CD8-positive, alpha-beta memory T cell (primary cell): ENCODE measurements at regions of chr22 and their contacts with region 1.

Region 1: GRCh38 chr22:22810018-22810427 is 77.6 kb upstream of the IGLL5 start:
- DNase-seq: peak; percentile 58 to 88 (median 74)
- H3K4me3 ChIP-seq: no peak overlapping the region
- H3K4me3 Mint-ChIP-seq: peak overlapping the region in 6 of 7 donors; percentile 60 to 87 (median 82)
- H3K27ac ChIP-seq: no peak overlapping the region
- H3K27ac Mint-ChIP-seq: peak overlapping the region; percentile 82 to 97 (median 88)
- H3K4me1 ChIP-seq: peaks cover 18% of the 10 kb centered on the region
- H3K4me1 Mint-ChIP-seq: peaks cover 86 to 94% (median 92%) of the 10 kb centered on the region in 3 donors
- H3K27me3 ChIP-seq: no peaks in the 10 kb centered on the region
- H3K27me3 Mint-ChIP-seq: no peaks in the 10 kb centered on the region

Region 2: GRCh38 chr22:22702237-22703202 is 107.5 kb before region 1 on chr22:
- CTCF ChIA-PET with region 1: no interaction called
- POLR2A ChIA-PET with region 1: no interaction called
- DNase-seq: no peak
- H3K4me3 ChIP-seq: no peak overlapping the region
- H3K4me3 Mint-ChIP-seq: no peak overlapping the region
- H3K27ac ChIP-seq: no peak overlapping the region
- H3K27ac Mint-ChIP-seq: no peak overlapping the region
- H3K4me1 ChIP-seq: no peaks in the 10 kb centered on the region
- H3K4me1 Mint-ChIP-seq: no peaks in the 10 kb centered on the region
- H3K27me3 ChIP-seq: no peaks in the 10 kb centered on the region
- H3K27me3 Mint-ChIP-seq: peaks cover 2 to 9% of the 10 kb centered on the region in 2 donors

Region 3: GRCh38 chr22:22770280-22770871 is 39.6 kb before region 1 on chr22:
- CTCF ChIA-PET with region 1: interaction called, 30 read pairs
- POLR2A ChIA-PET with region 1: no interaction called
- DNase-seq: peak; percentile 25 to 62 (median 31)
- H3K4me3 ChIP-seq: no peak overlapping the region
- H3K4me3 Mint-ChIP-seq: peak overlapping the region in 2 of 7 donors; percentile 0 to 15
- H3K27ac ChIP-seq: no peak overlapping the region
- H3K27ac Mint-ChIP-seq: peak overlapping the region; percentile 76 to 91 (median 84)
- H3K4me1 ChIP-seq: peaks cover 4% of the 10 kb centered on the region
- H3K4me1 Mint-ChIP-seq: peaks cover 72 to 97% (median 84%) of the 10 kb centered on the region in 3 donors
- H3K27me3 ChIP-seq: no peaks in the 10 kb centered on the region
- H3K27me3 Mint-ChIP-seq: no peaks in the 10 kb centered on the region

Region 4: DNA sequence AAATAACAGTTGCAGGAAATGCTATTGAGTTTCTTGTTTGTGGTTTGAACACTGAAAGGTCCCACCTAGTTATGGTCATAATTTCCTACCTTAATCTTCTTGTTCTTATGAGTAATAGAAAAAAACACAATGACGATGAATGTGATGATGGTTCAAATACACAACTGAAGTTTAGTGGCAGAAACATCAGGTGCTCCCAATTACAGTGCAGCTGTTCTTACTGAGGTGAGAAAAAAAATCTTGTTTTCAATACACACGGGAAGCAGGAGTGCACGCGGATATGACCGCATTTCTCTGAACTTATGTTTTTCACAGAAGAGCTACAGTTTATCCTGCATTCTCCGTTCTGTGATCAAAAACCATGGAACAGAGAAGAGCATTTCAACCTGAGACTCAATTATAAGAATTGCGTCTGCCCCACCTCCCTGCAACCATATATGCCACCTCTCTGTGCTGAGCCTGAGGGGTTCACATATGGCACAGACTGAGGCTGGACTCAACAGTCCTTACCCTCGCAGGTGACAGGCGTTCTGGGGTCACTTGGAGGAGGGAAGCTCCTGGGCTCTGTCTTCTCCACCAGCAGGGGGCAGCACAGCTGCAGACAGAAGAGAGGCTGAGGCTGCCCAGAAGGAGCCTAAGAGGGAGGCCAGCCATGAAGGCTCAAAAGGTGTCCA is 22.1 kb before region 1 on chr22:
- CTCF ChIA-PET with region 1: interaction called, 59 read pairs
- POLR2A ChIA-PET with region 1: interaction called, 5 read pairs
- DNase-seq: peak; percentile 46 to 84 (median 57)
- H3K4me3 ChIP-seq: no peak overlapping the region
- H3K4me3 Mint-ChIP-seq: peak overlapping the region; percentile 22 to 83 (median 52)
- H3K27ac ChIP-seq: peak overlapping the region; percentile 38
- H3K27ac Mint-ChIP-seq: peak overlapping the region; percentile 78 to 99 (median 90)
- H3K4me1 ChIP-seq: peaks cover 57% of the 10 kb centered on the region
- H3K4me1 Mint-ChIP-seq: peaks cover 79 to 92% (median 80%) of the 10 kb centered on the region in 3 donors
- H3K27me3 ChIP-seq: no peaks in the 10 kb centered on the region
- H3K27me3 Mint-ChIP-seq: no peaks in the 10 kb centered on the region

Region 5: GRCh38 chr22:22838148-22838786 is 28.2 kb after region 1 on chr22:
- CTCF ChIA-PET with region 1: interaction called, 12 read pairs
- POLR2A ChIA-PET with region 1: no interaction called
- DNase-seq: no peak
- H3K4me3 ChIP-seq: no peak overlapping the region
- H3K4me3 Mint-ChIP-seq: peak overlapping the region in 2 of 7 donors; percentile 27 to 38
- H3K27ac ChIP-seq: no peak overlapping the region
- H3K27ac Mint-ChIP-seq: peak overlapping the region in 6 of 8 donors; percentile 35 to 77 (median 62)
- H3K4me1 ChIP-seq: peaks cover 12% of the 10 kb centered on the region
- H3K4me1 Mint-ChIP-seq: peaks cover 30 to 49% (median 34%) of the 10 kb centered on the region in 3 donors
- H3K27me3 ChIP-seq: no peaks in the 10 kb centered on the region
- H3K27me3 Mint-ChIP-seq: peaks cover 0 to 3% of the 10 kb centered on the region in 2 donors

Region 6: GRCh38 chr22:22848364-22848866 is 38.4 kb after region 1 on chr22:
- CTCF ChIA-PET with region 1: interaction called, 184 read pairs
- POLR2A ChIA-PET with region 1: no interaction called
- DNase-seq: peak; percentile 49 to 83 (median 59)
- H3K4me3 ChIP-seq: no peak overlapping the region
- H3K4me3 Mint-ChIP-seq: peak overlapping the region in 3 of 7 donors; percentile 27 to 74 (median 38)
- H3K27ac ChIP-seq: no peak overlapping the region
- H3K27ac Mint-ChIP-seq: peak overlapping the region in 4 of 8 donors; percentile 47 to 67 (median 66)
- H3K4me1 ChIP-seq: peaks cover 10% of the 10 kb centered on the region
- H3K4me1 Mint-ChIP-seq: peaks cover 56 to 67% (median 65%) of the 10 kb centered on the region in 3 donors
- H3K27me3 ChIP-seq: no peaks in the 10 kb centered on the region
- H3K27me3 Mint-ChIP-seq: no peaks in the 10 kb centered on the region

Region 7: GRCh38 chr22:22855617-22856308 is 45.7 kb after region 1 on chr22:
- CTCF ChIA-PET with region 1: interaction called, 184 read pairs
- POLR2A ChIA-PET with region 1: no interaction called
- DNase-seq: peak; percentile 5 to 65 (median 21)
- H3K4me3 ChIP-seq: no peak overlapping the region
- H3K4me3 Mint-ChIP-seq: no peak overlapping the region
- H3K27ac ChIP-seq: no peak overlapping the region
- H3K27ac Mint-ChIP-seq: peak overlapping the region in 4 of 8 donors; percentile 42 to 74 (median 64)
- H3K4me1 ChIP-seq: no peaks in the 10 kb centered on the region
- H3K4me1 Mint-ChIP-seq: peaks cover 14 to 31% (median 17%) of the 10 kb centered on the region in 3 donors
- H3K27me3 ChIP-seq: no peaks in the 10 kb centered on the region
- H3K27me3 Mint-ChIP-seq: peaks cover 0 to 2% of the 10 kb centered on the region in 2 donors

Region 8: GRCh38 chr22:22870577-22871404 is 60.8 kb after region 1 on chr22:
- CTCF ChIA-PET with region 1: interaction called, 21 read pairs
- POLR2A ChIA-PET with region 1: no interaction called
- DNase-seq: no peak
- H3K4me3 ChIP-seq: no peak overlapping the region
- H3K4me3 Mint-ChIP-seq: no peak overlapping the region
- H3K27ac ChIP-seq: no peak overlapping the region
- H3K27ac Mint-ChIP-seq: peak overlapping the region in 3 of 8 donors; percentile 37 to 83 (median 38)
- H3K4me1 ChIP-seq: peaks cover 9% of the 10 kb centered on the region
- H3K4me1 Mint-ChIP-seq: peaks cover 28 to 39% (median 29%) of the 10 kb centered on the region in 3 donors
- H3K27me3 ChIP-seq: no peaks in the 10 kb centered on the region
- H3K27me3 Mint-ChIP-seq: peaks cover 0 to 4% of the 10 kb centered on the region in 2 donors

Region 9: DNA sequence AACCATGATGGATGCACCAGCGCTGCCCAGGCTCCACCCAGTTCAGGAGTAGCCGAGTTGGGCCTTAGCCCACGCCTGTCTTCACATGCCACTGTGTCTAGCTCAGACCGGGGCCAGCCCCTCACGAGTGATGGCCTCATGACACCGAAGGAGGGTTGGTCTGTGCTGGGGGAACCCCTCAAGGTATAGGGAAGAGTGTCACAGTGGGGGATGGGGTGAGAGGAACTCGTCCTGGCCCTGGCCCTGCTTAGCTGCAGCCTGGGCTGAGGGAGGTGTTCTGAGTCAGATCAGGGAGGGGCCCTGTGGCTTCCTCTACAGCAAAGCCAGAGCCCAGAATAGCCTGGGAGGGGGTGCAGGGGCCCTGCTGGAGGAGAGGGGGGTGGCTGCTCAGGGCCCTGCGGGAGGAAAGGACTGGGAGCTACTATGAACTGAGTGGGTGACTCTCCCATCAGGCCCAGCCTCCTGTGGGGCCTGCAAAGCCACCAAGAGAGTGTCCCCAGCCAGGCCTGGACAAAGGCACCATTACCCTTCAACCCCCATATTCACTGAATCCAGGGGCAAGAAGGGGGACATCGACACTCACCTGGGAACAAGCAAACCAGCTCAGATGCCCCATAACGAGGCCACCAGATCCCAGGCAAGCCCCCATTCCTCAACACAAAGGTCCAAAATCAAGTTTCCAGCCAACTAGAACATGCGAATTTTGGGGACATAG is 118.8 kb after region 1 on chr22:
- CTCF ChIA-PET with region 1: no interaction called
- POLR2A ChIA-PET with region 1: no interaction called
- DNase-seq: peak in 4 of 5 donors; percentile 5 to 74 (median 31)
- H3K4me3 ChIP-seq: no peak overlapping the region
- H3K4me3 Mint-ChIP-seq: peak overlapping the region in 3 of 7 donors; percentile 8 to 28 (median 17)
- H3K27ac ChIP-seq: no peak overlapping the region
- H3K27ac Mint-ChIP-seq: peak overlapping the region in 3 of 8 donors; percentile 23 to 74 (median 47)
- H3K4me1 ChIP-seq: peaks cover 11% of the 10 kb centered on the region
- H3K4me1 Mint-ChIP-seq: peaks cover 7 to 37% (median 17%) of the 10 kb centered on the region in 3 donors
- H3K27me3 ChIP-seq: no peaks in the 10 kb centered on the region
- H3K27me3 Mint-ChIP-seq: peaks cover 0 to 3% of the 10 kb centered on the region in 2 donors